ENCODE measurements at regions of chr15 and their contacts with region 1.

Region 1: GRCh38 chr15:89904519-89904918 is 8.2 kb downstream of the ARPIN start:
- DNase-seq: no peak
- ATAC-seq: no peak

Region 2: DNA sequence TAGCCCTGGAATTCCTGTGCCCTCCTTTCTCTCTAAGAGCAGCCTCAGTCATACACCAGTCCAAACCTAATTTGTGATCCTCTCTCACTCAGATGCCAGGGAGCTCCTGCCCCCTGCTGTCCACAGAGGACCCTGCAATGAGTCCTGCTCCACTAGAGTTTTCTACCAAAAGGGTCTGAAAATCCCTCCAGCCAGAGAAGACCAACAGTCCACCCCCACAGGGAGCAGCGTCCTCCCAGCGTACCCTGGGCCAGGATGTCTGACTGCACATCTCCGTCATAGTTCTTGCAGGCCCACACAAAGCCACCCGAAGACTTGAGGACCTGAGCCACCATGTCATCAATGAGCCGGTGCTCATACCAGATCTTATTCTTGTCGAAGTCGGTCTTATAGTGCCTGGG is 182.3 kb after region 1 on chr15:
- intact Hi-C with region 1: loop called in 1 of 2 experiments (anchors 10 kb)
- DNase-seq: no peak
- ATAC-seq: peak in 1 of 2 donors; percentile 23

Measured in left cardiac atrium (tissue), 4 donors.